B cell (primary cell): ENCODE measurements at regions of chr1 and their contacts with region 1.

Region 1: DNA sequence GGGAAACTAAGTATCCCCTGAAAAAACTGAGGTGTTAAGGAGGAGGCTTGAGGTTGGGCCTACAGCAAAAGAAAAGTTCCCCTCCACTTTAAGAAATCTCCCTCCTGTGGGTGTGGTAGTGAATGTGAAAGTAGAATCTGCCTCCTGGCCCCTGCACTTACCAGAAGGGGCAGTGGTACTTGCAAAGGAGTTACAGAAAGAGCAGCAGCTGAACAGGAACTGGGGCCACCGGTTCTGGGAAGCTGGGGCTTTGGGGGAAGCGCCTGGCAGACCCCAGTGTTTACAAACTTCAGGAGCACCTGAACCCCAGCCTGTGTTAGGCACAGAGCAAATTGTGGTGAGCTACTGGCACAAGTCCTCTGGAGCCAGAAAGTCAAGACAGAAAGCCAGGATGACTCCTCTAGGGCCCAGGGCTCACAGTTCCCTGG is 250.2 kb upstream of the FGGY start:
- DNase-seq: peak; percentile 75
- ATAC-seq: peak; percentile 95
- H3K4me3 ChIP-seq: peak overlapping the region in 2 of 5 experiments; percentile 8 to 23
- H3K4me3 Mint-ChIP-seq: peak overlapping the region; percentile 59
- H3K27ac ChIP-seq: peak overlapping the region; percentile 66 to 69
- H3K27ac Mint-ChIP-seq: peak overlapping the region; percentile 92
- H3K4me1 ChIP-seq: peaks cover 24% of the 10 kb centered on the region in 2 donors
- H3K4me1 Mint-ChIP-seq: peaks cover 31% of the 10 kb centered on the region
- H3K27me3 ChIP-seq: no peaks in the 10 kb centered on the region
- H3K27me3 Mint-ChIP-seq: no peaks in the 10 kb centered on the region
- CTCF ChIP-seq: peak; percentile 40

Region 2: DNA sequence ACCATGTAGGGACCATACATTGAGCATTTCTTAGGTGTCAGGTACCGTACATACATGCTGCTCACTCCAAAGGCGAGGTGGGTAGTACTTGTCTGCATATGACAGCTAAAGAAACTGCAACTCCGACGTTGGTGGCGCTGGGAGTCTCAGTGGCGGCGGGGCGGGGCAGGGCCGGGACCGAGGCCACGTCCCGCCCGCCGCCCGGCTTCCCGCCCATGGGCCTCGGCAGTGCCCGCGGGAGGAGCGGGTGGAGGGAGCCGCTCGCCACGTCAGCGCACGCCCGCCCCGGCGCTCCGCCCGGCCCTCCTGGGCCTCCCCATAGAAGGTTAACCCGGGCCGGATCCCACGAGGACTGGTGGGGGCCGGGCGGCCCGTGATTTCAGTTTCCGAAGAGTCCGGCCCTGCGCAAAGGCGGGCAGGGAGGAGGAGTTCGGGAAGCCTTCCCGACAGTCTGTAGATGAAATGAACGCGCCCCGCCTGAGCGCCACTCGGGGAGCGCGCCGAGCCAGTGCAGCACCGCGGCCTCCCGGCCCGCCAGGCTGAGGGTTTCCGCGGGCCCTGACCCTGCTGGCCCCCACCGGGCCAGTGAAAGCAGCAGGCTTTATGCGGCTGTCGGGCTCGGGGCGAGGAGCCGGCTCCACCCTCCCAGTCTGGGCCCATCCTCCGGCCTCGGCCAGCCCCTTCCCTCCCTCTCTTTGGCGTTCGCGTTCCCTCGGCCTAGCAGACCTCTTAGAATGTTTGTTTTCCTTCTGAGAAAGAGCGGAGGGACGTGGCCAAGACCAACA is 143.0 kb before region 1 on chr1:
- CTCF ChIA-PET with region 1: interaction called, 7 read pairs
- POLR2A ChIA-PET with region 1: no interaction called
- intact Hi-C with region 1: loop called (anchors 2 kb)
- DNase-seq: peak; percentile 77
- ATAC-seq: peak; percentile 88
- H3K4me3 ChIP-seq: peak overlapping the region; percentile 45 to 74 (median 60)
- H3K4me3 Mint-ChIP-seq: peak overlapping the region; percentile 85
- H3K27ac ChIP-seq: peak overlapping the region; percentile 49 to 82
- H3K27ac Mint-ChIP-seq: peak overlapping the region; percentile 86
- H3K4me1 ChIP-seq: peaks cover 10% of the 10 kb centered on the region in 2 donors
- H3K4me1 Mint-ChIP-seq: peaks cover 13% of the 10 kb centered on the region
- H3K27me3 ChIP-seq: no peaks in the 10 kb centered on the region
- H3K27me3 Mint-ChIP-seq: no peaks in the 10 kb centered on the region
- CTCF ChIP-seq: no peak

Region 3: DNA sequence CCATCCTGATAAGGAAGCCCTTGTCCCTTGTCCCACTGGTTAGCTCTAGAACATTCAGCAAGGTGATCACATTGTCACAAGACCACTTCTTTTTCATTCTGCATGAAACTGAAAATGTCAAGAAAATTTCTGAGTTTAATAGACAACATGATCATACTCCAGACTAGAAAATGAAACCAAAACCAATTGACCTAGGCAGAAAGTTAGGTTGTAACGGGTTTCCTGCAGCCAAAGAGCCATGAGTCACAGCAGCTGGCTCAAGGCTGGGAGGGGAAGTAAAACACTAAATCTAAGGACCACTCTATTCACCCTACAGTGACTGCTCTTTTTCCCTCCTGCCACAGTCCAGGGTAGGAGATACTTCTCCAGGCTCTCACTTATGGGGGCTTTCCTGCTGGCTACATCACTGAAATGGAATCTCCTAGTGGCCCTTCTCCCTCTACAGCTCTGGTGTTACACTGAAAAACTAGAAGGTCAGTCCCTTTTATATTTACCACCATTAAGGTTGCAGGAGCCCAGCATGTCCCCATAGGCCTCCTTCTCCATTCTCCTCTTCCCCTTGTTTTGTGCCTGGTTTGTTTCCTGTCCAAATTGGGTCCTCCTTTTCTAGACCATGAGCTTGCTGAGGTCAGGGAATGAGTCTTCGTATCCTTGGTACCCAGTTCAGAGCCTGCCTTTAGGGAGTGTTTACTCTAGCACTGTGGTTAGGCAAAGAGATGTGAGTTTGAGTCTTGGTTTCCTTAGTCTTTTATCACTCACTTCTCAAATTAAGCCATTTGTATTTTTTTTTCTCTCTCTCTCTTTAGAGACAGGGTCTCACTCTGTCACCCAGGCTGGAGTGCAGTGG is 26.4 kb before region 1 on chr1:
- CTCF ChIA-PET with region 1: interaction called, 3 read pairs
- POLR2A ChIA-PET with region 1: interaction called, 3 read pairs
- intact Hi-C with region 1: loop called (anchors 1 kb)
- DNase-seq: peak; percentile 83
- ATAC-seq: peak; percentile 94
- H3K4me3 ChIP-seq: peak overlapping the region in 3 of 5 experiments; percentile 18 to 41 (median 33)
- H3K4me3 Mint-ChIP-seq: peak overlapping the region; percentile 76
- H3K27ac ChIP-seq: peak overlapping the region; percentile 81 to 82
- H3K27ac Mint-ChIP-seq: peak overlapping the region; percentile 96
- H3K4me1 ChIP-seq: peaks cover 22 to 38% of the 10 kb centered on the region in 2 donors
- H3K4me1 Mint-ChIP-seq: peaks cover 48% of the 10 kb centered on the region
- H3K27me3 ChIP-seq: no peaks in the 10 kb centered on the region
- H3K27me3 Mint-ChIP-seq: no peaks in the 10 kb centered on the region
- CTCF ChIP-seq: no peak

Region 4: GRCh38 chr1:59128784-59129227 is 82.1 kb after region 1 on chr1:
- CTCF ChIA-PET with region 1: no interaction called
- POLR2A ChIA-PET with region 1: no interaction called
- intact Hi-C with region 1: no loop called
- DNase-seq: no peak
- ATAC-seq: no peak
- H3K4me3 ChIP-seq: no peak overlapping the region
- H3K4me3 Mint-ChIP-seq: no peak overlapping the region
- H3K27ac ChIP-seq: no peak overlapping the region
- H3K27ac Mint-ChIP-seq: no peak overlapping the region
- H3K4me1 ChIP-seq: no peaks in the 10 kb centered on the region
- H3K4me1 Mint-ChIP-seq: no peaks in the 10 kb centered on the region
- H3K27me3 ChIP-seq: no peaks in the 10 kb centered on the region
- H3K27me3 Mint-ChIP-seq: peaks cover 9% of the 10 kb centered on the region
- CTCF ChIP-seq: no peak